H1 (cell line): ENCODE measurements at regions of chr1 and their contacts with region 1.

Region 1: DNA sequence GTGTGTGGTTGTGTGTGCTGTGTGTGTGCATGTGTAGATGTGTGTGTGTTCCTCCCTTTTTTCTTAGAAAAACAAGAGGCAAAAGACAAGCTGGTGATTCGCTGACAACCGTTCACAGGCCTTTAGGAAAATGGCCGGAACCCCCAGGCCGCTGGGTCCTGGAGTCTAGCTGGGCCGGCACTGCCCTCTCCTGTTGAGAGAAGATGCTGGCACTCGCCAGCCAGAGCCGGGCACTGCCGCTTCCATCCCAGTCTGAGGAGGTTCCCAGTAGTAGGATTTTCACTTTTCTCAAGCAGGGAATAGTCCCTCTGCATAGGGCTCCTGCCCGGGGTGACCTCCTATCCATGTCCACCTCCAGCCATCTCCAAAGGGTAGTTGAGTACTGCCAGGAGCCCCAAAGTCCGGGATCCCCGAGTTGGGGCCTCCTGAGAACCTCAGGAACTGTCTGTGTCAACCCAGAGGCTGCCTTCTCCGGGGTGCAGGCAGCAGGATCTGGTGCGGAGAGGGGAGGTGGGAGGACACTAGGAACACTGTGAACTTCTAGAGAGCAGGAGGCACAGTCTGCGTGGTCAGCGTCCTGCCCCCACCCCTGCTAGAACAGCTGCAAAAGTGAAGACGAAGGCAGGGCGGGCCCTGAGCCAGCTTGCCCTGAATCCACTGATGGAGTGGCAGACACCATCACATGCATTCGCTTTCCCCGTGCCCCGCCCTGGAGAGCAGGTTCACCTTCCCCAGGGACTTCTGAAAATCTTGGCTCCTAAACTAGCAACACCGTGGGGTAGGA is 44.1 kb upstream of the ARHGEF16 start:
- DNase-seq: no peak
- H3K4me3 ChIP-seq: no peak overlapping the region
- H3K27ac ChIP-seq: no peak overlapping the region
- H3K4me1 ChIP-seq: no peaks in the 10 kb centered on the region
- H3K27me3 ChIP-seq: peaks cover 0 to 2% (median 0%) of the 10 kb centered on the region in 4 experiments; a peak in 1 of 7 replicates
- CTCF ChIP-seq: peak in 2 of 3 experiments; percentile 51 to 57; a peak in 3 of 4 replicates
- EP300 ChIP-seq: no peak
- POLR2A ChIP-seq: no peak
- RAD21 ChIP-seq: peak; percentile 74 to 86

Region 2: GRCh38 chr1:3423245-3423829 is 13.0 kb after region 1 on chr1:
- CTCF ChIA-PET with region 1: interaction called, 11 read pairs
- POLR2A ChIA-PET with region 1: no interaction called
- DNase-seq: no peak
- H3K4me3 ChIP-seq: no peak overlapping the region
- H3K27ac ChIP-seq: no peak overlapping the region
- H3K4me1 ChIP-seq: peaks cover 0 to 2% (median 0%) of the 10 kb centered on the region in 4 experiments; a peak in 1 of 7 replicates
- H3K27me3 ChIP-seq: no peaks in the 10 kb centered on the region
- CTCF ChIP-seq: no peak
- EP300 ChIP-seq: no peak
- POLR2A ChIP-seq: no peak
- RAD21 ChIP-seq: no peak

Region 3: GRCh38 chr1:3483801-3484444 is 73.6 kb after region 1 on chr1:
- CTCF ChIA-PET with region 1: no interaction called
- POLR2A ChIA-PET with region 1: no interaction called
- DNase-seq: peak; percentile 44 to 97
- H3K4me3 ChIP-seq: no peak overlapping the region
- H3K27ac ChIP-seq: no peak overlapping the region
- H3K4me1 ChIP-seq: no peaks in the 10 kb centered on the region
- H3K27me3 ChIP-seq: no peaks in the 10 kb centered on the region
- CTCF ChIP-seq: peak in 2 of 3 experiments; percentile 81 to 95; a peak in 3 of 4 replicates
- EP300 ChIP-seq: no peak
- POLR2A ChIP-seq: no peak; a peak in 1 of 3 replicates
- RAD21 ChIP-seq: peak; percentile 70 to 81

Region 4: DNA sequence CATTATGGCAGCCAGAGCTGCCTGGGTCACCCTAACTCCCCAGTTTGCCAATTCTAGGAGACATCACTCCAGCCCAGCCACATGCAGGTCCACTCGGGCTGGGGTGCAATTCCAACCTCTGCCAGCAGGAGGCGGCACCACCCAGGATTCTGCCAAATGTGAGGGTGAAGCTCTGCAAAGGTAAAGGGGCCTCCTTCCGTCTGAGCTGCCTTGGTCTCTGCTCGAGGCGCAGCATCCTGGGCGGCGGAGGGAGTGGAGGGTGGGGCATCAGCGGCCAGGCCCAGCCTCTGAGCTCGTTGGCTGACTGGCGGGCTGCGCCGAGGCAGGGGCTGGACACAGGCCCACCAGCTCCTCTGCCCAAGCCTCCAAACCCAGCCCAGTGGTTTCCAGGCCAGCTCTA is 107.9 kb after region 1 on chr1:
- CTCF ChIA-PET with region 1: no interaction called
- POLR2A ChIA-PET with region 1: no interaction called
- DNase-seq: peak in 1 of 2 experiments; percentile 87
- H3K4me3 ChIP-seq: no peak overlapping the region
- H3K27ac ChIP-seq: no peak overlapping the region
- H3K4me1 ChIP-seq: no peaks in the 10 kb centered on the region; a peak in 2 of 7 replicates
- H3K27me3 ChIP-seq: no peaks in the 10 kb centered on the region
- CTCF ChIP-seq: peak in 2 of 3 experiments; percentile 48 to 73; a peak in 2 of 4 replicates
- EP300 ChIP-seq: no peak
- POLR2A ChIP-seq: no peak
- RAD21 ChIP-seq: peak; percentile 39 to 50; a peak in 3 of 4 replicates